ENCODE measurements at regions of chr2 and their contacts with region 1.

Region 1: DNA sequence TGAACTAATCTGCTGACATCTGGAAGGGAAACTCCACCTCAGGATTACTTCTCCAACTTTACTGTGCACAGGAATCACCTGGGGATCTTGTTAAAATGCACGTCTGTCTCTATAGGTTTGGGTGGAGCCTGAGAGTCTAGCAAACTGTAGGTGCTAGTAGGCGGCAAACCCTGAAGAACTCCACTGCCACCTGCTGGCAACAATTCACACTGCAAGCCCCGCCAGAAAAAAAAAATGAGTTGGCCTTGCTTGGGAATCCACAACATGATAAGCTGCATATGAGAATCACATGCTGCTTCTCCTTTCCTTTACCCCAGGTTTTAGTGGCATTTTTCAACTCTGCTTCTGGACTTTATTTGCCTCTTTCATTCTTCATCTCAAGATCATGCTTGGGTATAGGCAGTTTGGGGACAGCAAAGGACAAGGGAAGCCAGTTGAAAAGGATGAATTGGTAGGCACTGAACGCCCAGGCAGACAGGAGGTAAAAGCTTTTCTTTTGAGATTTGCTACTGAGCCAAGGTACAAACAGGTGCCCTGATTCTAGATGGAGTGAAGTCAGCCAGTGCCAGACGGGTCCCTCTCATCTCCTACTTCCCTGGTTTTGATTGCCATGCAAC is 88.8 kb downstream of the VIT start:
- DNase-seq: peak; percentile 76

Region 2: DNA sequence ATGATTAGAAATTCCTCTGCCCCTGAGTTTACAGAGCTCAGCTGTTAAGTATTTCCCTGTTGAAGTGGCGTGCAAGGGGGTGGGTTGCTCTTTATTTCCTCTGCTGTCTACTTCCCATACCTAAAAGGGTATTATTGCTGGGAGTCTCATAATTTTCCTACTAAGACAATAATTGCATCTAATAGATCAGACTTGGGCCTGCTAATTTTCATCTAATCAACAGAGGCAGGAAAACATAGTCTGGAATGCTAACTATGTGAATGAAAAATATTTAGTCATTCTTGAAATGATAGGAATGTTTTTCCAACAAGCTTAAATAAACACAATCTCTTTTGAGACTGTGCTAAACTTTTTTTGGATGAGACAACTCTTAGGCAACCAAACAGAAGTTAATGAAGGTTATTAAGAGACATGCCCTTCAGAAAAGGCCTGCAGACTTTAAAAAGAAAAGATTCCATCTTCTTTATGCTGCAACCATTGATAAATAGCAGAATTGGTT is 298.7 kb before region 1 on chr2:
- CTCF ChIA-PET with region 1: no interaction called
- POLR2A ChIA-PET with region 1: no interaction called
- DNase-seq: no peak

Region 3: DNA sequence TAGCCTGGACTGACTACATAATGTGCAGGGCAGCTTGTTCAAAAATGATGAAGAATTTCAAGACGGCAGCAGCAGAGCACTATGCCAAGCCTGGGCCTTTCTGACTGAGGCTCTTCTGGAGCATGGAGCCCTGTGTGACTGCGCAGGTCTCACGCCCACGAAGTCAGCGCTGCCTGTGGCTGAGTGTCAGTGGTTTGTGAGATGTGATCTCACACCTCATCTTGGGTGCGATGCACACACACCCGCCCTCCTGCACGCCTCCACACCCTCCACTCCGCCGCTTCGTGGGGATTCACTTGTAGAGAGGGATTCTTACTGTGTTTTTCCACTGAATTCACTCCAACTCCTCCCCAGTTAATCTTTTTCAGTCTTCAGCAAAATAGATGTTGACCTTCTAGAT is 15.1 kb after region 1 on chr2:
- CTCF ChIA-PET with region 1: interaction called, 15 read pairs
- POLR2A ChIA-PET with region 1: no interaction called
- DNase-seq: no peak

Measured in HEK293T (cell line).